Endothelial cell of umbilical vein (primary cell): ENCODE measurements at regions of chr7 and their contacts with region 1.

Region 1: GRCh38 chr7:76166404-76167255 is 35.1 kb upstream of the SRRM3 start:
- DNase-seq: peak; percentile 96
- H3K4me3 ChIP-seq: peak overlapping the region; percentile 21 to 67 (median 48)
- H3K27ac ChIP-seq: peak overlapping the region; percentile 20
- H3K4me1 ChIP-seq: peaks cover 2% of the 10 kb centered on the region
- H3K27me3 ChIP-seq: no peaks in the 10 kb centered on the region
- CTCF ChIP-seq: peak in 1 of 2 donors; percentile 26
- POLR2A ChIP-seq: peak; percentile 73

Region 2: DNA sequence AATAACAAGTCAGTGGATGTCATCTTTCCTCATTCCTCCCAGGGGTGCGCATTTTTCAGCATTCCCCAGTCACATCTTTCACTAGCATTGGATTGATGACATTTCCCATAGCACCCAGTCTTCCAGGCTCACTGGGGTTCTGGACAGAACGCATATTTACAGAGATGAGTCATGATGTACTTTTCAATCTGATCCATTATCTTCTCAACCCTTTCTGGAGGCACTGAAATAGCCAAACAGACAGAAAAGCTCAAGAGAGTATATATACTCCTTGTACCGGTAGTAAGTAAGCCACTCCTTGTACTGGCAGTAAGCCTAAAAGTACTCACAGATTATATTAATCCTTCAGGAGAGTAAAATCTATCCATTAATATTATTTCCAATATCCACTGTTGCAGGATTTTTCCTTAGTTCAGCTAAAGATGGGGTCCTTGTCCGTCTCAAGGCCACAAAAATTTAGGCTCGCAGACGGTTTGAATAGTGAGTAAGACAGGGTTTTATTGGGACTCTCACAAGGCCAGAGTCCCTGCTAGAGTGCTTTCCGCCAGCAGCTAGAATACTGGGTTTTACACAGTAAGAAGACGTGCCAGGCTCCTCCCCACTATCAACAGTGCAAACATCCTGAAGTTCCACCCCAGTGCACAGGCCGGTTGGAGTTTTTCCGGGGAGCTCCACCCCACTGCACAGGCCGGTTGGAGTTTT is 57.9 kb before region 1 on chr7:
- CTCF ChIA-PET with region 1: no interaction called
- POLR2A ChIA-PET with region 1: no interaction called
- dilution Hi-C with region 1: no loop called
- intact Hi-C with region 1: no loop called
- DNase-seq: no peak
- H3K4me3 ChIP-seq: no peak overlapping the region
- H3K27ac ChIP-seq: no peak overlapping the region
- H3K4me1 ChIP-seq: no peaks in the 10 kb centered on the region
- H3K27me3 ChIP-seq: no peaks in the 10 kb centered on the region
- CTCF ChIP-seq: no peak
- POLR2A ChIP-seq: no peak

Region 3: GRCh38 chr7:76121044-76121443 is 45.6 kb before region 1 on chr7:
- CTCF ChIA-PET with region 1: no interaction called
- POLR2A ChIA-PET with region 1: no interaction called
- dilution Hi-C with region 1: no loop called
- intact Hi-C with region 1: no loop called
- DNase-seq: no peak
- H3K4me3 ChIP-seq: no peak overlapping the region
- H3K27ac ChIP-seq: no peak overlapping the region
- H3K4me1 ChIP-seq: peaks cover 6% of the 10 kb centered on the region
- H3K27me3 ChIP-seq: no peaks in the 10 kb centered on the region
- CTCF ChIP-seq: no peak
- POLR2A ChIP-seq: no peak

Region 4: GRCh38 chr7:76185187-76185896 is 18.7 kb after region 1 on chr7:
- CTCF ChIA-PET with region 1: no interaction called
- POLR2A ChIA-PET with region 1: no interaction called
- dilution Hi-C with region 1: no loop called
- intact Hi-C with region 1: no loop called
- DNase-seq: no peak
- H3K4me3 ChIP-seq: no peak overlapping the region
- H3K27ac ChIP-seq: no peak overlapping the region
- H3K4me1 ChIP-seq: no peaks in the 10 kb centered on the region
- H3K27me3 ChIP-seq: peaks cover 0 to 4% of the 10 kb centered on the region in 2 experiments
- CTCF ChIP-seq: no peak
- POLR2A ChIP-seq: no peak

Region 5: DNA sequence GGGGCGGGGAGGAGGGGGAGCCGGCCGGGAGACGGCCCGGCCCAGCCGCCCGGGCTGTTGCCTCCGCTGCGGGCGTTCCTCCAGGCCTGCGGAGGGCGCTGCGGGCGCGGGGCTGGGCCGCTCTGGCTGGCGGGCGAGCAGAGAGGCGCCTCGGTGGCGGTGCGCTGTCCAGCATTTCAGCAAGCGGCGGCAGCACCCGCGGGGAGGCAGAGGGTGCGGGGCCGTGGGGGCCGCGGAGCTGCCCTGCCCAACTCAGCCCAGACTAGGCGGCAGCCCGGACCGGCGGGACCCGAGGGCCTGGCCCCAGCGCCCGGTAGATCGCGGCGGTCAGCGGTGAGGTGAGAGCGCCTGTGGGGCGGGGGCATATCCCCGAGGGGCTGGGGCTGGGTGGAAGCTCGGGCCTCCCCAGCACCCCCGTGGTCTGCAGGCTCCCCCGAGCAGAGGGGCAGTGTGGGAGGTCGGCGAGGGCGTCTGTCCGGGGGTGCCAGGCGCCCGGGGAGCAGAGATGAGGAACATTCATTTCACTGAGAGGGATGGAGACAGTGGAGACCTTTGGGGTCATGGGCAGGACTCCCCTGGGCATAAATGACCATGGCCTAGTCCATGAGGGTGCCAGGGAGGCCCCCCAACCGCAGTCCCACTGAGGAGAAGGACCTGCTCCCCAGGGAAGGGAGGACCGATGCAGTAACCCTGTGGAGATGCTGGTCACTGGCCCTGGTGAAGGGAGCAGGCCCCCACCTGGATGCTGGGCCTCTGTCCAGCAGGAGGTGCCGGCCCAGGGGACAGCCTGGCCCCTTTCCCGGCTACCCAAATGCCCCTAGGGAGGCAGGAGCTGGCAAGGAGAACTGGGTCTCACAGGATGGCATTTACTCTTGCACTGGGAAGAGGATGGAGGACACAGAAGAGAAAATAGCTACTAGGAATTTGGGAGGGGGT is 35.4 kb after region 1 on chr7 and contains the start of gene SRRM3:
- CTCF ChIA-PET with region 1: no interaction called
- POLR2A ChIA-PET with region 1: interaction called, 4 read pairs
- dilution Hi-C with region 1: no loop called
- intact Hi-C with region 1: loop called (anchors 1 kb)
- DNase-seq: peak; percentile 49
- H3K4me3 ChIP-seq: no peak within 1 kb of the TSS
- H3K27ac ChIP-seq: no peak within 1 kb of the TSS
- H3K4me1 ChIP-seq: no peaks in the 10 kb centered on the region
- H3K27me3 ChIP-seq: no peaks in the 10 kb centered on the region
- CTCF ChIP-seq: peak; percentile 57 to 78
- POLR2A ChIP-seq: no peak
- total RNA-seq, gene SRRM3: 4.8 and 5.4 TPM in 2 replicates